GM12878 (cell line): ENCODE measurements at regions of chr13 and their contacts with region 1.

Region 1: DNA sequence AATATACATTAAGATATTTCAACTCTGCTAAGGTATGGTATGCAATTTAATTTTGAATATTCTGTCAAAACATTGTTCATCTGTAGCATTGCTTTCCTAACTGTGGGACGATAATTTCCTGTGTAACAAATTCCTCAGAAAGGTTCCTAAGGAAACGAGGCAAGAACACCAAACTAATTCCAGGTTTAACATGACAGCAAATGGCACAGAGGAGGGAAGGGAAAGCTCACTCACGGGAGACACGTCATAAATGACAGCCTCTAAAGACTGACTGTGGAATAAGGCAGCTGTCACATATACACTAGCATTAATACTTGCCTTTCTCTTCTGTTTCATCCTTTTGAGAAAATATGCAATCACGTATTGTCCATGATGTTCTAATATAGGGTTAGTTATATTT is 380.6 kb downstream of the LIG4 start:
- DNase-seq: no peak
- ATAC-seq: no peak
- H3K4me3 ChIP-seq: no peak overlapping the region
- H3K27ac ChIP-seq: no peak overlapping the region
- H3K4me1 ChIP-seq: no peaks in the 10 kb centered on the region
- H3K27me3 ChIP-seq: no peaks in the 10 kb centered on the region
- CTCF ChIP-seq: no peak
- EP300 ChIP-seq: no peak
- POLR2A ChIP-seq: no peak
- RAD21 ChIP-seq: no peak

Region 2: DNA sequence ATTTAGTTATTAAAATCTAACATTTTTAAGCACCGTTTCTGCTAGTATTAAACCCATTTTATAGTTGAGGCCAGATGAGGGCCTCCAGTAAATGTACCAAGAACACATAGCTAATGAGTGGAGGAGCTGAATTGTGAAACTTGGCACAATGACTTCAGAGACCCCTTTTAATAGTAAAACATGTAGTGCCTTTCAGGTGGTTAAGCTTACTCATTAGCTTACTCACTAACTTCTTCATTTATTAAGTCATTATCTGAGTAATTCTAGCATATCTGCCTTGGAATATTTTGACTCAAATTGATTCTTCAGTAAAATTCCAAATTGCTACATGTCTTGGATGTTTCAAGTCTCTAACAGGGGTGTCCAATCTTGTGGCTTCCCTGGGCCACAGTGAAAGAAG is 354.6 kb before region 1 on chr13:
- CTCF ChIA-PET with region 1: no interaction called
- POLR2A ChIA-PET with region 1: no interaction called
- RAD21 ChIA-PET with region 1: no interaction called
- SMC1A ChIA-PET with region 1: no interaction called
- in situ Hi-C with region 1: no loop called
- intact Hi-C with region 1: loop called (anchors 5 kb)
- DNase-seq: no peak
- ATAC-seq: no peak
- H3K4me3 ChIP-seq: no peak overlapping the region
- H3K27ac ChIP-seq: no peak overlapping the region
- H3K4me1 ChIP-seq: no peaks in the 10 kb centered on the region
- H3K27me3 ChIP-seq: no peaks in the 10 kb centered on the region
- CTCF ChIP-seq: no peak
- EP300 ChIP-seq: no peak
- POLR2A ChIP-seq: no peak
- RAD21 ChIP-seq: no peak

Region 3: GRCh38 chr13:107886118-107886517 is 51.4 kb after region 1 on chr13:
- CTCF ChIA-PET with region 1: no interaction called
- POLR2A ChIA-PET with region 1: no interaction called
- RAD21 ChIA-PET with region 1: no interaction called
- SMC1A ChIA-PET with region 1: no interaction called
- in situ Hi-C with region 1: no loop called
- intact Hi-C with region 1: no loop called
- DNase-seq: no peak
- ATAC-seq: no peak
- H3K4me3 ChIP-seq: no peak overlapping the region
- H3K27ac ChIP-seq: no peak overlapping the region
- H3K4me1 ChIP-seq: no peaks in the 10 kb centered on the region
- H3K27me3 ChIP-seq: no peaks in the 10 kb centered on the region
- CTCF ChIP-seq: no peak
- EP300 ChIP-seq: no peak
- POLR2A ChIP-seq: no peak
- RAD21 ChIP-seq: no peak